Right ventricle myocardium inferior (tissue), 1 donor: ENCODE measurements at regions of chr6 and their contacts with region 1.

Region 1: DNA sequence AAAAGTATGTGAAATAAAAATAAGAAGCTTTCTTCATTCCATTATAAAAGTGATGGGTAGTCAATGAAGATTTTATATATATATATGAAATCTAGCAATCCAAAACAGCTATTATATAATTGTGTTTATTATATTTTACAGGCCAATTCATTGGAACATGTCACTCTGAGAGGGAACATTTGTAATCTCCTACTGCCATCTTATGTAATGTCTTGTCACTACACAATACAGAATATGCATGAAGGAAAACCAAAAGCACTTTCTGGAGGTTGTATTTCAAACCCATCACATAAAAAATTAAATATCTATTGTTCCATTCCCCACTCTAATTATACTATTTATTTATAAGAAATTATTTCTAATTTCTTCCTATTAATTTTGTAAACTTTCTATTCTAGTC is 31.5 kb upstream of the IRAK1BP1 start:
- DNase-seq: no peak
- ATAC-seq: no peak

Region 2: DNA sequence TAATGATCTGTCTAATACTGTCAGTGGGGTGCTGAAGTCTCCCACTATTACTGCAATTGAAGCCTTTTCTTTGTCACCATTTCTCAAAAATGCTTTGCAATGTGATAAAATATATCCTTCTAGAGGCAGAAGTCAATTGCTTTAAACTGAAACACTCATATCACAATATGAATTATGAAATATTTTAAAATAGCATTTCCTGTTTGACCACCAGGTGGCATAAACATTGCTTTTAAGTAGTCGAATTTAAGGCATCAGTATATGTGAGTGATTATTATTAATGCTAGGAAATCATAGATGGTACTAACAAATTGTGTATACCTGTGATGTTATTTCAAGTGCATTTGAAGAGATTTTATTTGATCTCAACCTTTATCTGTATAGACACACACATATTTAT is 1095.4 kb before region 1 on chr6:
- intact Hi-C with region 1: loop called (anchors 10 kb)
- DNase-seq: no peak
- ATAC-seq: no peak

Region 3: GRCh38 chr6:78883651-78884050 is 47.8 kb after region 1 on chr6:
- intact Hi-C with region 1: no loop called
- DNase-seq: no peak
- ATAC-seq: no peak